Spleen (tissue), 13 donors: ENCODE measurements at regions of chr18 and their contacts with region 1.

Region 1: GRCh38 chr18:34122724-34123334 is 101.9 kb downstream of the NOL4 start:
- DNase-seq: no peak
- H3K4me3 ChIP-seq: no peak overlapping the region
- H3K27ac ChIP-seq: no peak overlapping the region
- H3K4me1 ChIP-seq: no peaks in the 10 kb centered on the region
- H3K27me3 ChIP-seq: no peaks in the 10 kb centered on the region
- CTCF ChIP-seq: peak in 10 of 11 experiments; percentile 23 to 75 (median 58)
- POLR2A ChIP-seq: no peak

Region 2: DNA sequence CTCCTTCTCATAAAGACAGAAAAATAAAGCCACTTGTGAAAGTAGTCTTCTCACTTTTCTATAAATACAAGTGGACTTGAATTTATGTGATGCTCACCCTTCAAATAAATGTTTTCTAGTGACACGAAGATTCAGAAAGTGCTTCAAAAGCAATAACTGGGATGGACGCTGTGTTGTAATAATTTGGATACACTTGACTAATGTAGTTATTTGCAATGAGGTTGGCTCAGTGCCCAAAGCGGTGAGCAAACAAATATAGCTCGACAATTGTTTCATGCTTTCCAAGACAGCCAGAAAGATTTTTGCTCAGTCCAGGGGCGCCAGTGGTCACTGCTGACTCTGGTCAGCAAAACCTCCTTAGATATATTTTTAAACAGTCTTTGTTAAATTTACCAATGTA is 1071.4 kb before region 1 on chr18:
- intact Hi-C with region 1: no loop called
- DNase-seq: no peak
- H3K4me3 ChIP-seq: no peak overlapping the region
- H3K27ac ChIP-seq: no peak overlapping the region
- H3K4me1 ChIP-seq: no peaks in the 10 kb centered on the region
- H3K27me3 ChIP-seq: no peaks in the 10 kb centered on the region
- CTCF ChIP-seq: no peak
- POLR2A ChIP-seq: no peak

Region 3: GRCh38 chr18:34048423-34048822 is 74.4 kb before region 1 on chr18:
- intact Hi-C with region 1: no loop called
- DNase-seq: no peak
- H3K4me3 ChIP-seq: no peak overlapping the region
- H3K27ac ChIP-seq: no peak overlapping the region
- H3K4me1 ChIP-seq: no peaks in the 10 kb centered on the region
- H3K27me3 ChIP-seq: no peaks in the 10 kb centered on the region
- CTCF ChIP-seq: no peak
- POLR2A ChIP-seq: no peak

Region 4: DNA sequence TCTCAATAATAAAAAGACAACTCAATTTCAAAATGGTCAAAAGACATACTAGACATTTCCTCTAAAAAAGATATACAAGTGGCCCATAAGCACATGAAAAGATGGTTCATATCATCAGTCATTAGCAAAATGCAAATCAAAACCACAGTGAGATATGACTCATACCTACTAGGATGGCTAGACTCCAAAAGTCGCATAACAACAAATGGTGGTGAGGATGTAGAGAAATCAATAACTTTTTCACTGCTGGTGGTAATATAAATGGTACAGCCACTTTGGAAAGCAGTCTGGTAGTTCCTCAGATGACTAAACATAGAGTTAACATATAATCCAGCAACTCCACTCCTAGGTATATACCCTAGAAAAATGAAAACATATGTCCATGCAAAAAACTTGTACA is 344.2 kb after region 1 on chr18:
- intact Hi-C with region 1: no loop called
- DNase-seq: no peak
- H3K4me3 ChIP-seq: no peak overlapping the region
- H3K27ac ChIP-seq: no peak overlapping the region
- H3K4me1 ChIP-seq: no peaks in the 10 kb centered on the region
- H3K27me3 ChIP-seq: no peaks in the 10 kb centered on the region
- CTCF ChIP-seq: no peak
- POLR2A ChIP-seq: no peak

Region 5: GRCh38 chr18:34787931-34788532 is 665.2 kb after region 1 on chr18:
- intact Hi-C with region 1: loop called (anchors 10 kb)
- DNase-seq: no peak
- H3K4me3 ChIP-seq: no peak overlapping the region
- H3K27ac ChIP-seq: no peak overlapping the region
- H3K4me1 ChIP-seq: no peaks in the 10 kb centered on the region
- H3K27me3 ChIP-seq: no peaks in the 10 kb centered on the region
- CTCF ChIP-seq: peak; percentile 37 to 76 (median 67)
- POLR2A ChIP-seq: no peak